HEK293T (cell line): ENCODE measurements at regions of chr2 and their contacts with region 1.

Region 1: DNA sequence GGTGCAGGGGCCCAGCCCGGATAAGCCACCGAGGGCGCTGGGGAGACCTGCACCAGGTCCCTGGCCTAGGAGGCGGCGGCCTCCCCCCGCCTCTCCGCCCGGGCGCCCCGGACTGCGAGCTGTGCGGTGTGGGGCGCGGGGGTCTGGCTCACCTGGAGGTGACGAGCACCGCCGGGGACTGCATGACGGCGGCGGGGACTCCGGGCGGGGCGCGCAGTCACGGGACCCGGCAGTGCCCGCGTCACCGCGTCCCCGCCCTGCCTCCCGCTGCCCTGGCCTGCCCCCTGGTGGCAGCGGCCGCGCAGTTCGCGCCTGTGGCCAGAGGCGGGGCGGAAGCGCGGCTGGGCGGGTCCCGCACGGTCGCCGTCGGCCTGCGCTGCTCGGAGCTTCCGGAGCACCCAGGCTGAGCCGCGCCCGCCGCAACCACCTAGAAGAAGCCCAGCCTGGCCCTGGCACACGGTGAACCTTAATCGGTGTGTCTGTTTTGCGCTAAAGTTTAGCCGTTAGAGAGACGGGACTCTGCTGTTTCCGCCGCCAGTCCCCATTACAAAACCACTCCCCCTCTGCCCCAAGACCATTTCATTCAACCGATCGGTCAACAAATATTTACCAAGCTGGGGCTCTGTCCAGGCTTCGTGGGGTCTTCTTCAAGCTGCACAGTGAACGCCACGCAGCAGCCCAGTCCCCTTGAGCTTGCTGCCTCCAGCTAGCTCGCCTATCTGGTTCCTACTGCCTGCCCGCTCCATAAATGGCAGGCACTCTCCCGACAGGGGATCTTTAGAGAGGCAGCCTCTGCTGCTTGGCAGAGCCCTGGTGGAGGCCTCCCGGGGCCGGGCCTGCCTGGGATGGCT is at the start of gene HS1BP3:
- DNase-seq: peak; percentile 96

Region 2: DNA sequence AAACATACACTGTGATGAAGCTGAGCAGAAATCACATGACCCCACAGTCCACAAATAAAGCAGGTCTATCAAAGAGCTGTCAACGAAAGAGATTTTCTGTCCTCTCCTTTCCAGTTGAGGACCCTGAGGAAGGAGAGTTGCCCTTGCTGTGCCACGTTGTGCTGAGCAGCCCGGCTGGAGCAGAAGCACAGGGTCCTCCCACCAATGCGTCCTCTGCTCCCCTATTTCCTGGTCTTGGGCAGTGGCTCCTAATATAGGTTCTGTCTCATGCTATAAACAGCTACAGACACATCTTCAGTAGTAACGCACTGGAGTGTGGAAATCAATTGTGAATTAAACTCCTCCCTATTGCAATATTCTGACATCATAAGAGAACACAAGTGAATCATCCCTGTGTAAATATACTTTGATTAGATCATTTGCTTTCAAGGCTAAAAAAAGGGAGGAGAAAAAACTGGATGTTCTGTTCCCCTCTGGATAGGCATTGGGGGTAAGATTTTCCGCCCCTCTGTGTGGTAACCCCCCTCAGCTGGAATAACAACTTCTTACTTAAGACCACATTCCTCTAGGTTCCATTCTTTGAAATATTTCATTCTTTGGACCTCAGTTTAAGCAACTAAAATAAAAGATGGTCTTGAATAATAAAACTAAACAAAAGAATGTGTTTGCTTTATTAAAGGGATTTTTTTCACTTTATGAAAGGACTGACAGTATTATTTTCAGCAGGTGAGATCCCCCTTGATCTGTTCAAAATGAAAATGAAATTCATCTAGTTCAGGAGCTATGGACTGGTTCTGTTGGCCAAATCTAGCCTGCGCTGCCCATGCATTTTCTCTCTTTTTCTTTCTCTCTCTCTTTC is 212.5 kb before region 1 on chr2:
- CTCF ChIA-PET with region 1: interaction called, 15 read pairs
- POLR2A ChIA-PET with region 1: interaction called, 9 read pairs
- DNase-seq: no peak

Region 3: DNA sequence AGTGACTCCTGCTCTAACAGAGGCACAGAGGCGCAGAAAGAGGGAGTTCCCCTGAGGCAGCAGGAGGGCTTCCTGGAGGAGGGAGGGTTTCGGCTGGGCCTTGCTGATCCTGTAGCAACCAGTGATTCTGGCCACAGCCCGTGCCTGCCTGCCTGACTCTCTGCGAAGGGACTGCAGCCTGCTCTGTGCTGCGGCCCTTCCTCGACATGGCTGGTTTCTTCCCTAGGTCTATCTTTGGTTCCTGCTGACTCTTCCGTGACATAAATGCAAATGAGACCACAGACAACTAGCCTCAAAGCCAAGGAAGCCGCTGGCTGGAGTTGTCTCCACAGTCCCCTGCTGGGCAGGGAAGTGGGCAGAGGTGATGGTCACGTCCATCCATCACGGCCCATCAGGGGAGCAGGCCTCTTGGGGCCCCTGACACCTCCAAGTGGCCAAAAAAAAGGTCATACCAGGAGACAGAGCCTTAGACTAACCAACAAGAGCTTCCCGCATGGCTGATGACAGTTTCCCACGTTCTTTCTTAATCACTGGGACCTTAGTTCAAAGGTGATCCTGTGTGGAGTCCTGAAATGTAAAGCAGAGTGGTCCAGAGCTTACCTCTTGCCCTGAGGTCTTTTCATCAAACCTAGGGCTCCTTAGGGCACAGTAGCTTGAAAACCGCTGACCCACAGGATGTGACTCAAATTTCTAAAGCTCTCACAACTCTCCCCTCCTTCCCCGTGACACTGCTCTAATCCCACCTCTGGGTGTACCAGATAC is 55.5 kb before region 1 on chr2:
- CTCF ChIA-PET with region 1: no interaction called
- POLR2A ChIA-PET with region 1: no interaction called
- DNase-seq: no peak